CD4-positive, alpha-beta T cell (primary cell): ENCODE measurements at regions of chr5 and their contacts with region 1.

Region 1: GRCh38 chr5:148730943-148731861 is 76.9 kb upstream of the HTR4 start:
- DNase-seq: peak; percentile 27 to 85 (median 48)
- ATAC-seq: peak; percentile 95
- H3K4me3 ChIP-seq: peak overlapping the region; percentile 24
- H3K4me3 Mint-ChIP-seq: peak overlapping the region; percentile 57
- H3K27ac ChIP-seq: no peak overlapping the region
- H3K27ac Mint-ChIP-seq: no peak overlapping the region
- H3K4me1 ChIP-seq: no peaks in the 10 kb centered on the region
- H3K4me1 Mint-ChIP-seq: peaks cover 5% of the 10 kb centered on the region
- H3K27me3 ChIP-seq: no peaks in the 10 kb centered on the region
- H3K27me3 Mint-ChIP-seq: peaks cover 11% of the 10 kb centered on the region
- CTCF ChIP-seq: peak; percentile 98

Region 2: DNA sequence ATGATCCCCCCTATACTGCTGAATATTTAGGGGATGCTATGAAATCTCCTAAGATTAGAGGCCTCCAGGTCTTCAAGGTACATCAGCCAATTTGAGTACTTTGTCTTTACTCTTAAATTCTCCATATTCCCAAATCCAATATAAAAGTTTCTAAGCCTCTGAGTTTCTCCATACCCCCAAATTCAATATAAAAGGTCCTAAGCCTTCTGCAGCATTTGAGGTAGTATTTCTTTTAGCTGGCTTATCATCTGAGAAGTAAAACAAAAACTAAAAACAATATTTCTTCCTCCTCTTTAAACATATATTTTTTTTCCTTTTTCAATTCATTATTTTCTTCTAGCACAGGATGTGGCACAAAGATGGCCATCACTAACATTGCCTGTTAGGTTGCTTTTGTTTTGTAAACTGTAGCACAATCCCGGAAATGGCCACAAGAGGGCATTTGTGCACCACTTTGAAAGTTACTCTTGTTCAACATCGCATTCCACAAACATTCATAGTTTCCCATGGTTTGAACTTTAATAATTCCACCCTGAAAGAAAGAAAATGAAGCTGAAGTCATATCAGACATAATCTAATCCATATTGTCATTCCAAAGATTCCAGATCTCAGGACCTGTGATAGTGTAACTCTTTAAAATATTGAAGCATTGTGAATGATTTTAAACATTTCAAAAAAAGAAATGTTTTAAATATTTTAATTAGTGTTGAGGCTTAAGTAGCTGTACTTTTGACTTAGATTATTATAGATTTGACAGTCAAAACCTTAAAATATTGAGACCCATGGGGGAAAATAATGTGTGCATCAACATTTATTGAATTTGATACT is 873.7 kb before region 1 on chr5:
- CTCF ChIA-PET with region 1: no interaction called
- POLR2A ChIA-PET with region 1: no interaction called
- intact Hi-C with region 1: loop called (anchors 5 to 10 kb)
- DNase-seq: peak in 10 of 14 experiments; percentile 3 to 51 (median 14)
- ATAC-seq: no peak
- H3K4me3 ChIP-seq: no peak overlapping the region
- H3K4me3 Mint-ChIP-seq: no peak overlapping the region
- H3K27ac ChIP-seq: no peak overlapping the region
- H3K27ac Mint-ChIP-seq: no peak overlapping the region
- H3K4me1 ChIP-seq: no peaks in the 10 kb centered on the region
- H3K4me1 Mint-ChIP-seq: no peaks in the 10 kb centered on the region
- H3K27me3 ChIP-seq: peaks cover 0 to under 1% of the 10 kb centered on the region in 2 experiments
- H3K27me3 Mint-ChIP-seq: no peaks in the 10 kb centered on the region
- CTCF ChIP-seq: peak; percentile 82

Region 3: GRCh38 chr5:148443998-148444397 is 287.2 kb before region 1 on chr5:
- CTCF ChIA-PET with region 1: interaction called, 23 read pairs
- POLR2A ChIA-PET with region 1: no interaction called
- intact Hi-C with region 1: loop called (anchors 1 to 2 kb)
- DNase-seq: peak in 11 of 14 experiments; percentile 4 to 71 (median 25)
- ATAC-seq: peak; percentile 83
- H3K4me3 ChIP-seq: no peak overlapping the region
- H3K4me3 Mint-ChIP-seq: no peak overlapping the region
- H3K27ac ChIP-seq: no peak overlapping the region
- H3K27ac Mint-ChIP-seq: no peak overlapping the region
- H3K4me1 ChIP-seq: no peaks in the 10 kb centered on the region
- H3K4me1 Mint-ChIP-seq: no peaks in the 10 kb centered on the region
- H3K27me3 ChIP-seq: no peaks in the 10 kb centered on the region
- H3K27me3 Mint-ChIP-seq: no peaks in the 10 kb centered on the region
- CTCF ChIP-seq: peak; percentile 83

Region 4: GRCh38 chr5:148831590-148832565 is 100.7 kb after region 1 on chr5:
- CTCF ChIA-PET with region 1: interaction called, 3 read pairs
- POLR2A ChIA-PET with region 1: no interaction called
- intact Hi-C with region 1: loop called (anchors 5 kb)
- DNase-seq: peak in 2 of 14 experiments; percentile 22 to 29
- ATAC-seq: no peak
- H3K4me3 ChIP-seq: peak overlapping the region; percentile 88
- H3K4me3 Mint-ChIP-seq: no peak overlapping the region
- H3K27ac ChIP-seq: no peak overlapping the region
- H3K27ac Mint-ChIP-seq: no peak overlapping the region
- H3K4me1 ChIP-seq: peaks cover 19% of the 10 kb centered on the region
- H3K4me1 Mint-ChIP-seq: peaks cover 21% of the 10 kb centered on the region
- H3K27me3 ChIP-seq: no peaks in the 10 kb centered on the region
- H3K27me3 Mint-ChIP-seq: peaks cover 13% of the 10 kb centered on the region
- CTCF ChIP-seq: no peak

Region 5: GRCh38 chr5:149035372-149035790 is 304.2 kb after region 1 on chr5:
- CTCF ChIA-PET with region 1: interaction called, 15 read pairs
- POLR2A ChIA-PET with region 1: no interaction called
- intact Hi-C with region 1: loop called (anchors 1 kb)
- DNase-seq: peak; percentile 47 to 78 (median 57)
- ATAC-seq: peak; percentile 74
- H3K4me3 ChIP-seq: no peak overlapping the region
- H3K4me3 Mint-ChIP-seq: no peak overlapping the region
- H3K27ac ChIP-seq: no peak overlapping the region
- H3K27ac Mint-ChIP-seq: no peak overlapping the region
- H3K4me1 ChIP-seq: peaks cover 6% of the 10 kb centered on the region
- H3K4me1 Mint-ChIP-seq: peaks cover 25% of the 10 kb centered on the region
- H3K27me3 ChIP-seq: no peaks in the 10 kb centered on the region
- H3K27me3 Mint-ChIP-seq: peaks cover 5% of the 10 kb centered on the region
- CTCF ChIP-seq: peak; percentile 83

Region 6: DNA sequence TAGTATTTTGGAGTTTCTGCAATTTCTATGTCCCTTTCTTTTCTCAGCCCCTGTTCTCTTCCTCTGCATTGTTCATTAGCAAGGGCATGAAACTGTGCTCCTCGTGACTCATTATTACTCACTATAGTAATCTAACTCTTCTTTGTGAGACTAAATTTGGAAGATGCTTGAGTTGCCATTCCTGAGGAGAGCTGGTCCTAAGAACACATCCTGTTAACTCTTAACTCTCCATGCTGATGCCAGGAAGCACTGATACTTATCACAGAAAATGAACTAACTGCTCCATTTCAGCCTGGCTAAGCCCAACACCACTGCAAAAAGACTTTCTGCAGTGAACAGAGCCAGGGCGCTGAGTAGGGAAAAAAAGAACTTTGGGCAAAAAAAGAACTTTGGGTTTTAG is 830.6 kb after region 1 on chr5:
- CTCF ChIA-PET with region 1: no interaction called
- POLR2A ChIA-PET with region 1: no interaction called
- intact Hi-C with region 1: loop called in 1 of 2 experiments (anchors 10 kb)
- DNase-seq: peak in 2 of 14 experiments; percentile 5 to 18
- ATAC-seq: no peak
- H3K4me3 ChIP-seq: no peak overlapping the region
- H3K4me3 Mint-ChIP-seq: no peak overlapping the region
- H3K27ac ChIP-seq: no peak overlapping the region
- H3K27ac Mint-ChIP-seq: no peak overlapping the region
- H3K4me1 ChIP-seq: peaks cover 8% of the 10 kb centered on the region
- H3K4me1 Mint-ChIP-seq: peaks cover 25% of the 10 kb centered on the region
- H3K27me3 ChIP-seq: no peaks in the 10 kb centered on the region
- H3K27me3 Mint-ChIP-seq: no peaks in the 10 kb centered on the region
- CTCF ChIP-seq: no peak